Left ventricle myocardium superior (tissue), 1 donor: ENCODE measurements at regions of chr13 and their contacts with region 1.

Region 1: DNA sequence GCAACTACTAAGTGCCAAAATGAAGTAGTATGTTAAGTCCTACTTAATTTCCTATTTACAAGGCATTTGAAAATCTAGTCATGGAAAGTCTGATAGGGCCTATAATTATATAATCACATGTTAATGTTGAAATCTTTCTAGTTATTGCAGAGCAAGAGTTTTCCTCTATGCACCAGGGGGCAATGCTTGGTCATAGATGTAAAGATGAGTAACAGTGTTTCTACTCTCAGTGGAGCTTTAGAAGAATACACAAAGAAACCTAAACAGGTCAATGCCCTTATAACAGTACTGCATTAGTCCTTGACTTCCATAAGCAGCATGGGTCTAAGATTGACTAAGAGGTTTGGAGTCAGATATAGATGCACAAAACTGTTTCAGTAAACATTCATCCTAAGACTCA is 218.7 kb downstream of the KCTD12 start:
- DNase-seq: no peak
- ATAC-seq: peak; percentile 61

Region 2: DNA sequence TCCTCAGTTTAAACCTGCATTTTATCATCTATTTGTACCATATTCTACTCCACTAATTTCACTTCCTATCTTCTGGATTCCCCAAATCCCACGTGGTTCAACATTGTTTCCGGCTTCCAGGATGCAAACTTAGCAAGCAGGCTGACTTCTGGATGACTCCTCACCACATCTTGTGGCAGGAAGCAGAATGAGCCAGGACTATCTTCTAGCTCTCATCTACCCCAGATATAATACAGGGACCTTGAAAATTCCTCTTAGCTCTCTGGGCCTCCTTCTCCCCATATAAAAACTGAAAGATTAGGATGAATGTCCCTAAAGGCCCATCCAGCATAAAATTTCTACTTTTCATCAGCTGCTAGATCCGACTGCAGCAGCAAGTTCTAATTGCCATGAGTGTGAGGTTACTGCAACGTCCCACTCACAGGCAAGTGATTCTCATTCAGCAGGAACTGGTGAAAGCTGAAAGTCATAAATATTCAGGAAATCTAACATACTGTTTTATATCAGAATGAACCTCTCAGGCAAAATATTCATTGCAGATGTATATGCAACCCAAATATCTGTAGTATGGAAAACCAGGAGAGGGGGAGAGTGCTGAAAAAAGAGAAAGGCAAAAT is 125.3 kb after region 1 on chr13:
- intact Hi-C with region 1: no loop called
- DNase-seq: no peak
- ATAC-seq: peak; percentile 90

Region 3: GRCh38 chr13:76903544-76904162 is 236.1 kb after region 1 on chr13:
- intact Hi-C with region 1: loop called (anchors 2 kb)
- DNase-seq: peak; percentile 49
- ATAC-seq: peak; percentile 77

Region 4: GRCh38 chr13:76980075-76980718 is 312.6 kb after region 1 on chr13:
- intact Hi-C with region 1: loop called (anchors 5 kb)
- DNase-seq: peak; percentile 91
- ATAC-seq: peak; percentile 97